ENCODE measurements at regions of chr10 and their contacts with region 1.

Region 1: GRCh38 chr10:21278491-21279239 is 246.8 kb downstream of the SKIDA1 start:
- DNase-seq: peak; percentile 77 to 92 (median 80)
- ATAC-seq: peak; percentile 99
- H3K4me3 ChIP-seq: no peak overlapping the region
- H3K27ac ChIP-seq: no peak overlapping the region
- H3K4me1 ChIP-seq: peaks cover 0 to 5% of the 10 kb centered on the region in 2 experiments; a peak in 2 of 5 replicates
- H3K27me3 ChIP-seq: no peaks in the 10 kb centered on the region
- CTCF ChIP-seq: peak; percentile 83 to 90 (median 88)
- EP300 ChIP-seq: no peak
- POLR2A ChIP-seq: no peak
- RAD21 ChIP-seq: peak; percentile 90 to 95

Region 2: GRCh38 chr10:20811131-20811530 is 467.5 kb before region 1 on chr10:
- CTCF ChIA-PET with region 1: no interaction called
- POLR2A ChIA-PET with region 1: no interaction called
- in situ Hi-C with region 1: no loop called
- intact Hi-C with region 1: no loop called
- DNase-seq: no peak
- ATAC-seq: no peak
- H3K4me3 ChIP-seq: no peak overlapping the region
- H3K27ac ChIP-seq: no peak overlapping the region
- H3K4me1 ChIP-seq: no peaks in the 10 kb centered on the region
- H3K27me3 ChIP-seq: no peaks in the 10 kb centered on the region
- CTCF ChIP-seq: no peak
- EP300 ChIP-seq: no peak
- POLR2A ChIP-seq: no peak
- RAD21 ChIP-seq: no peak

Region 3: DNA sequence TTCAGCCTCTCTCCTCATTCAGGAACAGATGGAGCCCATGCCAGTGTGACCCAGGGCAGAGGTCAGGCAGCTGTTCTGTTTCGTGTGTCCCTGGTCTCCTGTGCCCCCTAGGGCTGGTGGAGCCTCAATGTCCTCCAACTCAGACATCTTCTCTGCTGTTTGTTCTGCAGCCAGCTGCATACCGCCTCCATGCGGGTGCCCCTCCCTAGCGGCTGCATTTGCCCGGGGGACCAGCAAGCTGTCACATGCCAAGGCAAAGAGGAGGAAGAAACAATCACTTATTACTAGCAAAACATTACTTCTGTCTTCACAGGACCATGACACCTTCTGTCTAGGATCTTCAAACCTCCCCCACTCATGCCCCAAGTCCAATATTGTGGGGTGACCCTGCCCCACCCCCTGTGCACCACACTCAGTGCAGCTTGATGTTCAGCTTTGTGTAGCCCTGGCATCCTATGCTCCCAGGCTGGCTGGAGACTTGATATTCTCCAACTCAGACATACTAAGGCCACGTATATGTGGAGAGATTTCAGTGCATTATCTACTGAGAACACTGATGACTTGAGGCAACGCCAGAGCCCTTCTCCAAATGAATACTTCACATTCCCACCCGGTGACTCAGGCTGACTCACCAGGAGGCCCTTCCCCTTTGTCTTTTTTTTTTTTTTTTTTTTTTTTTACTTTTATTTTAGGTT is 58.0 kb after region 1 on chr10:
- CTCF ChIA-PET with region 1: no interaction called
- POLR2A ChIA-PET with region 1: no interaction called
- in situ Hi-C with region 1: no loop called
- intact Hi-C with region 1: loop called (anchors 1 kb)
- DNase-seq: peak; percentile 67 to 91 (median 77)
- ATAC-seq: peak; percentile 91
- H3K4me3 ChIP-seq: no peak overlapping the region
- H3K27ac ChIP-seq: peak overlapping the region; percentile 11; the same call in 1 of the 3 replicates
- H3K4me1 ChIP-seq: peaks cover 10 to 21% of the 10 kb centered on the region in 2 experiments
- H3K27me3 ChIP-seq: no peaks in the 10 kb centered on the region; a peak in 1 of 5 replicates
- CTCF ChIP-seq: peak in 2 of 3 experiments; percentile 11; a peak in 1 of 6 replicates
- EP300 ChIP-seq: peak; percentile 78; the same call in 1 of the 2 replicates
- POLR2A ChIP-seq: no peak
- RAD21 ChIP-seq: peak in 1 of 2 experiments; percentile 25; a peak in 1 of 4 replicates

Region 4: GRCh38 chr10:21479570-21480315 is 201.1 kb after region 1 on chr10:
- CTCF ChIA-PET with region 1: no interaction called
- POLR2A ChIA-PET with region 1: no interaction called
- in situ Hi-C with region 1: loop called (anchors 5 kb)
- intact Hi-C with region 1: no loop called
- DNase-seq: no peak
- ATAC-seq: no peak
- H3K4me3 ChIP-seq: no peak overlapping the region
- H3K27ac ChIP-seq: no peak overlapping the region
- H3K4me1 ChIP-seq: no peaks in the 10 kb centered on the region
- H3K27me3 ChIP-seq: no peaks in the 10 kb centered on the region; a peak in 1 of 5 replicates
- CTCF ChIP-seq: no peak
- EP300 ChIP-seq: no peak
- POLR2A ChIP-seq: no peak
- RAD21 ChIP-seq: no peak

Region 5: GRCh38 chr10:21732067-21732772 is 453.6 kb after region 1 on chr10:
- CTCF ChIA-PET with region 1: no interaction called
- POLR2A ChIA-PET with region 1: no interaction called
- in situ Hi-C with region 1: loop called (anchors 5 kb)
- intact Hi-C with region 1: loop called (anchors 2 kb)
- DNase-seq: peak; percentile 56 to 74 (median 68)
- ATAC-seq: peak; percentile 99
- H3K4me3 ChIP-seq: no peak overlapping the region
- H3K27ac ChIP-seq: no peak overlapping the region
- H3K4me1 ChIP-seq: no peaks in the 10 kb centered on the region; a peak in 1 of 5 replicates
- H3K27me3 ChIP-seq: no peaks in the 10 kb centered on the region
- CTCF ChIP-seq: peak; percentile 80 to 92 (median 83)
- EP300 ChIP-seq: no peak
- POLR2A ChIP-seq: no peak
- RAD21 ChIP-seq: peak; percentile 73 to 92

Region 6: DNA sequence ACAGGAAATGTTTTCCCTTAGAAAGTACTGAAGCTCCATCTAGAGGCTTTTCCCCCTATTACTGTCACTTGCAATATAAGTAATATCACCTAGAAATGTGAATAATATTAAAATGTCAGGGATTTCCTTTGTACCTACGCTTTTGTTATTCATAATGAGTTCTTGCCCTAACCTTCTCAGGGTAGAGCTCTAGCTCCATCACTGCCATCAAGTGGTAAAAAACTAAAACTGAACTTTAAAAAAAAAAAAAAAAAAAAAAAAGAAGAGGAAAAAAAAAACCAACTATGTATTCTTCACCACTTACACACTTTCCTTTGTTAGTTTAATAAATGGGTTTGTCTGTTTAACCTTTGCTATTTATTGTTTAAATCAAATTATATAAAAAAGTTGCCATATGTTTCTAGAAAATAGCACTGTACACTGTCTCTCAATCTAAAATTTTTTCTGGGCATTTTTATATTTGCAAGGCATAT is 675.0 kb after region 1 on chr10:
- CTCF ChIA-PET with region 1: no interaction called
- POLR2A ChIA-PET with region 1: no interaction called
- in situ Hi-C with region 1: no loop called
- intact Hi-C with region 1: loop called (anchors 5 kb)
- DNase-seq: peak; percentile 45 to 55 (median 50)
- ATAC-seq: peak; percentile 75
- H3K4me3 ChIP-seq: no peak overlapping the region
- H3K27ac ChIP-seq: no peak overlapping the region
- H3K4me1 ChIP-seq: peaks cover 4 to 7% of the 10 kb centered on the region in 2 experiments; a peak in 3 of 5 replicates
- H3K27me3 ChIP-seq: no peaks in the 10 kb centered on the region
- CTCF ChIP-seq: peak in 2 of 3 experiments; percentile 23 to 66; a peak in 2 of 6 replicates
- EP300 ChIP-seq: no peak
- POLR2A ChIP-seq: no peak
- RAD21 ChIP-seq: peak; percentile 36 to 57; a peak in 3 of 4 replicates